Activated CD4-positive, alpha-beta T cell treated with anti-CD3 and anti-CD28 coated beads for 36 hours (primary cell): ENCODE measurements at regions of chr17 and their contacts with region 1.

Region 1: DNA sequence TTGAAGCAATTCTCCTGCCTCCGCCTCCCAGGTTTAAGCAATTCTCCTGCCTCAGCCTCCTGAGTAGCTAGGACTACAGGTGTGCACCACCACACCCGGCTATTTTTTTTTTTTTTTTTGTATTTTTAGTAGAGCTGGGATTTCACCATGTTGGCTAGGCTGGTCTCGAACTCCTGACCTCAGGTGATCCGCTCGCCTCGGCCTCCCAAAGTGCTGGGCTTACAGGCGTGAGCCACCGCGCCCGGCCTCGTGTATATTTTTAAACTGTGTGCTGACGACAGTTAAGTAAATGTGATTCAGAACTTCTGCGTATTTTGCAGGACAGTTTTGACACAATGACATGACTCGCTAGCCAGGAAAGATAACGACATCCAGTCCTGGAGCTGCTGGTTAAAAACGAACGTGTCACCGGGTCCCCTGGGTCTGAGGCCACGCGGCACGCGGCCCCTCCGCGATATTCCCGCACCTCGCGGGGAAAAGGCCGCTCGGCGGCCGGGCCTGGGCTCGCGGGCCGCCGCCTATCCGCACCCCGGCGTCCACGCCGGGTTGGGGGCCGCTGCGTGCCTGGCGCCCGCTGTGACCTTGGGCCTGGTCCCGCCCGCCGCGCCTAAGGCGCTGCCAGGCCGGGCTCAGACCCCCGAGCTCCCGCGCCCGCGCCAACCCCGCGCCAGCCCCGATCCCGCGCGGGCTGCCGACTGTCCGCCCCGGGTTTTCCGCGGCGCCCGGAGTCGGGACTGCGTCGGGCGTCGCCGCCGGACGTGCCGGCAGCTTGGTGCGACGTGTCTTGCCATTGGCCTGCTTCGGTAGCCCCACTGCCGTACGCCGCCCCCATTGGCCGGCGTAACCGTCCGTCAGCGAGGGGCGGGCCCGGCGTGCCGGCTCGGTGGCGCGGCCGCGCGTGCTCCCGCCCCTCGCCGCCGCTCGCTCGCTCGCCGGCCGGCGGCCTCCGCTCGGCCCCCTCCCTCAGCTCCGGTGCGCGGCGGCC is at the start of gene FOXK2:
- DNase-seq: peak; percentile 95
- ATAC-seq: peak; percentile 98
- H3K4me3 Mint-ChIP-seq: peak within 1 kb of the TSS; percentile 88
- H3K27ac Mint-ChIP-seq: peak within 1 kb of the TSS; percentile 92
- H3K4me1 Mint-ChIP-seq: peaks cover 24% of the 10 kb centered on the region
- H3K27me3 Mint-ChIP-seq: no peaks in the 10 kb centered on the region
- total RNA-seq, gene FOXK2: 58.1 to 75.4 TPM

Region 2: DNA sequence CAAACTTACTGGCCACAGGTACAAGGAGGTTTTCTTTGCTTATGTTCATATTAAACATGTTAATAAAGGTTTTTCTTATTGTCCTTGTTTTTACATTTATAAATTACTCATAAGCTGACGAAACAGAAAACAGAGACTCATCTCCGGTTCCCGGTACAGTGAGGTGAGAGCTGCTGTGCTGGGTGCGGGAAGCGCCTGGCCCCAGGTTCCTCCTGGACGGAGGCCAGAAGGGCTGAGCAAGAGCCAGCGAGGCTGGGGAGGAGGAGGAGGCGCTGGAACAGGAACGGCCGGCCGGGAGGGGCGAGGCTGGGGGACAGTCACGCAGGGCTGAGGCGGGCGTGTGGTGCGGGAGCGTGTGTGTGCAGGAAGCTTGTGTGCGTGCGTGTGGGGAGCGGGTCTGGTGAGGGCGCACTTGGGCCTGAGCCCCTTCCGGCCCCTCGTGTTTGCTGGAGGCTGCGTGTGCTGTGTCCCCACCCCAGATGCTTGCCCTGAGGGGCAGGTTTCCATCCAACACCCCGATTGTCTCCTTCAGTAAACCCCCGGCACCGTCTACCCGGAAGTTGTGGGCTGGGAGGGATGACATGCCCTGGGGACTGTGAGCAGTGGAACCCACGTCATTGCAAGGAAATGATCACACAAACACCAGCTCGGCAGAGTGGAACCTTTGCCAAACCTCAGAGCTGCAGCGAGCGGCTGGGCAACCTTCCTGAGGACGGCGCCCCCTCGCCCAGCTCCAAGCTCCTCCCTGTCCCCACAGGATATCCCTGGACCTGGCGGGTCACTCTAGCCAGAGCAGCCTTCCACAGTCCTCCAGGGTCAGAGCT is 221.2 kb before region 1 on chr17:
- CTCF ChIA-PET with region 1: interaction called, 3 read pairs
- POLR2A ChIA-PET with region 1: no interaction called
- intact Hi-C with region 1: loop called in 1 of 2 experiments (anchors 2 kb)
- DNase-seq: peak; percentile 96
- ATAC-seq: peak; percentile 62
- H3K4me3 Mint-ChIP-seq: peak overlapping the region; percentile 80
- H3K27ac Mint-ChIP-seq: peak overlapping the region; percentile 100
- H3K4me1 Mint-ChIP-seq: peaks cover 70% of the 10 kb centered on the region
- H3K27me3 Mint-ChIP-seq: no peaks in the 10 kb centered on the region

Region 3: DNA sequence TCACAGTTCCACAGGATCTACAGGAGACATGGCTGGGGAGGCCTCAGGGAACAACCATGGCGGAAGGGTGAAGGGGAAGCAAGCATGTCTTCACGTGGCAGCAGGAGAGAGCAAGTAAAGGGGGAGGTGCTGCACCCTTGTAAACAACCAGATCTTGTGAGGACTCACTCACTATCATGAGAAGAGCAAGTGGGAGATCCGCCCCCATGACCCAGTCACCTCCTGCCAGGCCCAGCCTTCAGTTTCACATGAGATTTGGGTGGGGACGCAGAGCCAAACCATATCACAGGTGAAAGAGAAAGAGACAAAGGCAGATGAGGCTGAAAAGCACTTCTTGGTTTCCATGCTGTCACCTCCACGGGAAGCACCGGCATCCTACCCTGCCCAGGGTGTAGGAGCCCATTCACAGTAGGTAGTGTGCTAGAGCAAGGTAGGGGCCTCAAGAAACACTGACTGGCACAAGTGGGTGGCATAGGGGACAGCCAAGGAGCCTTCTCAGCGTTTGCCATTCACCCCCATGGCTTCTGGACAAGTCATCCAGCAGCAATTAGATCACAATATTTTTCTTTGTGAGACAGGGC is 54.0 kb before region 1 on chr17:
- CTCF ChIA-PET with region 1: no interaction called
- POLR2A ChIA-PET with region 1: no interaction called
- intact Hi-C with region 1: no loop called
- DNase-seq: peak; percentile 53
- ATAC-seq: peak; percentile 71
- H3K4me3 Mint-ChIP-seq: no peak overlapping the region
- H3K27ac Mint-ChIP-seq: no peak overlapping the region
- H3K4me1 Mint-ChIP-seq: peaks cover 16% of the 10 kb centered on the region
- H3K27me3 Mint-ChIP-seq: no peaks in the 10 kb centered on the region

Region 4: DNA sequence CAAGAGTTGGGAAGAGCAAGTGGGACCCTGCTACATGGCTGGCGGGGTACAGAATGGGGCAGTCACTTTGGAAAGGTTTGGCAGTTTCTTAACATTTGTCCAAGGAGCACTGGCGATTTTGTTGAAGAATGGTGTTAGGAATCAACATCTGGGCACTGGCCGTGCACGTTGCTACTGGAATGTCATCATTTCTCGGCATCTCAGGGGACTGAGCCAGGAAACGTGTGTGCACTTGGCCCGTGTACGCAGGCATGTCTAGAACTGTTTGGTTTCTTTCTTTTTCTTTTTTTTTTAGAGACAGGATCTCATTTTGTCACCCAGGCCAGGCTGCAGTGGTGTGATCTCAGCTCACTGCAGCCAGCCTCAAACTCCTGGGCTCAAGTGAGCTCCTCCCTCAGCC is 16.9 kb before region 1 on chr17:
- CTCF ChIA-PET with region 1: interaction called, 3 read pairs
- POLR2A ChIA-PET with region 1: interaction called, 3 read pairs
- intact Hi-C with region 1: loop called (anchors 1 kb)
- DNase-seq: no peak
- ATAC-seq: no peak
- H3K4me3 Mint-ChIP-seq: no peak overlapping the region
- H3K27ac Mint-ChIP-seq: no peak overlapping the region
- H3K4me1 Mint-ChIP-seq: peaks cover 16% of the 10 kb centered on the region
- H3K27me3 Mint-ChIP-seq: no peaks in the 10 kb centered on the region

Region 5: DNA sequence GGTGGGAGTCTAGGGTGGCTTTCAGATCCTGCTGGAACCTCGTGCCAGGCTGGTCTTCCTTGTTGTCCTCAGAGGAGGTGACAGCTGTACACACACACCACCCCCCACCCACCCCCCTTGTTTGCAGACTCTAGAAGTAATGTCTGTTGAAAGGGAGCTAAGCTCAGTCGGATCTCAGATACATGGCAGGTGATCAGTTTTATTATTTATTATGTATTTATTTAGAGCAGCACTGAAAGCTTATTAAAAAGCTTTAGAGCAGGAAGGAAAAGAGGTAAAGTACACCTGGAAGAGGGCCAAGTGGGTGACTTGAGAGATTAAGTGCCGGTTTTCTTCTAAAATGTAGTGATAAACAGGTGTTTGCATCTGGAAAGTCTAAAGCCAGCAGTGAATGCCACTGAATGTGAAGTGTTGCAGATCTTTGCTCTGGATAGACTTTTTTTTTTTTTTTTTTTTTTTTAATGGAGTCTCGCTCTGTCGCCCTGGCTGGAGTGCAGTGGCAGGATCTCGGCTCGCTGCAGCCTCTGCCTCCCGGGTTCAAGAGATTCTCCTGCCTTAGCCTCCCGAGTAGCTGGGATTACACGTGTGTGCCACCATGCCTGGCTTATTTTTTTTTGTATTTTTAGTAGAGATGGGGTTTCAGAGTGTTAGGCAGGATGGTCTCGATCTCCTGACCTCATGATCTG is 40.6 kb after region 1 on chr17:
- CTCF ChIA-PET with region 1: no interaction called
- POLR2A ChIA-PET with region 1: no interaction called
- intact Hi-C with region 1: loop called in 1 of 2 experiments (anchors 5 kb)
- DNase-seq: no peak
- ATAC-seq: no peak
- H3K4me3 Mint-ChIP-seq: no peak overlapping the region
- H3K27ac Mint-ChIP-seq: no peak overlapping the region
- H3K4me1 Mint-ChIP-seq: peaks cover 19% of the 10 kb centered on the region
- H3K27me3 Mint-ChIP-seq: no peaks in the 10 kb centered on the region

Region 6: DNA sequence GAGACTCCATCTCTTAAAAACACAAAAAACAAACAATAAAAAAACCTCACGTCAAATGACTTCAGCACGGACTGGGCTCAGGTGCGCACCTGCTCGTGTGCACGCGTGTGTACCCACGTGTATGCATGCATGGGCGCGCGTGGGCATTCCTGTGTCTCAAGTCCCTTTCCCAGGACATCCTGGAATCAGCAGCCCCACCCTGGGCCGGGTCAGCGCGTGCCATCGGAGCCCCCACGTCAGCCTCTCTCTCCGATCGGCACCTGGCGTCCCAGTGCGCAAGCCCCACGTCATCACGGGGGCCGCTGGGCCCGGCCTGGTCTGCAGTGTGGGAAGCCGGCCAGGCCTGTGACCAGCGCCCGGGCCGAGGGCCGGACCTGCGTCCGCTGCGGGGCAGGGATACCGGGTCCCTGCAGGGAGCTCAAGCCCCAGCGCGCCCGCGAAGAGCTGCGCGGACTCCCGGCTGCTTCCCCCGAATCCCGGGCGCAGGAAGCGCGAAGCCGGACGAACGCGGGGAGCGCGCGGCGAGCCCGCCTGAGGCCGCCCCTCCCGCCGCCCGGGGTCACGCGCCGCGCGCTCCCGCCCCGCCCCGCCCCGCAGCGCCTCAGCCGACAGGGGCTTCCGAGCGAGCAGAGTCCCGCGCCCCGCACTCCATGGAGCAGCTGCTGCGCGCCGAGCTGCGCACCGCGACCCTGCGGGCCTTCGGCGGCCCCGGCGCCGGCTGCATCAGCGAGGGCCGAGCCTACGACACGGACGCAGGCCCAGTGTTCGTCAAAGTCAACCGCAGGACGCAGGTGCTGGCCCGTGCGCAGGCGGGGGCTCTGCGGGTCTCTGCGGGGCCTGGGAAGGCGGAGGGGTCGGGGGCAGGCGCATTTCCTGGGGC is 216.1 kb after region 1 on chr17 and contains the start of gene FN3K:
- CTCF ChIA-PET with region 1: no interaction called
- POLR2A ChIA-PET with region 1: no interaction called
- intact Hi-C with region 1: no loop called
- DNase-seq: peak; percentile 49
- ATAC-seq: peak; percentile 70
- H3K4me3 Mint-ChIP-seq: peak within 1 kb of the TSS; percentile 49
- H3K27ac Mint-ChIP-seq: peak within 1 kb of the TSS; percentile 25
- H3K4me1 Mint-ChIP-seq: peaks cover 2% of the 10 kb centered on the region
- H3K27me3 Mint-ChIP-seq: no peaks in the 10 kb centered on the region
- total RNA-seq, gene FN3K: 2.1 TPM

Region 7: GRCh38 chr17:82751571-82752370 is 232.7 kb after region 1 on chr17 and contains the start of gene TBCD:
- CTCF ChIA-PET with region 1: no interaction called
- POLR2A ChIA-PET with region 1: no interaction called
- intact Hi-C with region 1: loop called in 1 of 2 experiments (anchors 1 kb)
- DNase-seq: peak; percentile 95
- ATAC-seq: peak; percentile 83
- H3K4me3 Mint-ChIP-seq: peak within 1 kb of the TSS; percentile 84
- H3K27ac Mint-ChIP-seq: peak within 1 kb of the TSS; percentile 13
- H3K4me1 Mint-ChIP-seq: peaks cover 26% of the 10 kb centered on the region
- H3K27me3 Mint-ChIP-seq: no peaks in the 10 kb centered on the region
- total RNA-seq, gene TBCD: 83.3 to 97.2 TPM